ENCODE measurements at regions of chr9 and their contacts with region 1.

Region 1: GRCh38 chr9:133876144-133876543 is 116.0 kb downstream of the VAV2 start:
- DNase-seq: peak in 1 of 2 experiments; percentile 97
- H3K4me3 ChIP-seq: no peak overlapping the region
- H3K27ac ChIP-seq: no peak overlapping the region
- H3K4me1 ChIP-seq: peaks cover 0 to 10% (median 2%) of the 10 kb centered on the region in 4 experiments; a peak in 5 of 7 replicates
- H3K27me3 ChIP-seq: no peaks in the 10 kb centered on the region
- CTCF ChIP-seq: peak in 2 of 3 experiments; percentile 80 to 86; a peak in 3 of 4 replicates
- EP300 ChIP-seq: no peak
- POLR2A ChIP-seq: no peak
- RAD21 ChIP-seq: peak; percentile 54 to 71

Region 2: DNA sequence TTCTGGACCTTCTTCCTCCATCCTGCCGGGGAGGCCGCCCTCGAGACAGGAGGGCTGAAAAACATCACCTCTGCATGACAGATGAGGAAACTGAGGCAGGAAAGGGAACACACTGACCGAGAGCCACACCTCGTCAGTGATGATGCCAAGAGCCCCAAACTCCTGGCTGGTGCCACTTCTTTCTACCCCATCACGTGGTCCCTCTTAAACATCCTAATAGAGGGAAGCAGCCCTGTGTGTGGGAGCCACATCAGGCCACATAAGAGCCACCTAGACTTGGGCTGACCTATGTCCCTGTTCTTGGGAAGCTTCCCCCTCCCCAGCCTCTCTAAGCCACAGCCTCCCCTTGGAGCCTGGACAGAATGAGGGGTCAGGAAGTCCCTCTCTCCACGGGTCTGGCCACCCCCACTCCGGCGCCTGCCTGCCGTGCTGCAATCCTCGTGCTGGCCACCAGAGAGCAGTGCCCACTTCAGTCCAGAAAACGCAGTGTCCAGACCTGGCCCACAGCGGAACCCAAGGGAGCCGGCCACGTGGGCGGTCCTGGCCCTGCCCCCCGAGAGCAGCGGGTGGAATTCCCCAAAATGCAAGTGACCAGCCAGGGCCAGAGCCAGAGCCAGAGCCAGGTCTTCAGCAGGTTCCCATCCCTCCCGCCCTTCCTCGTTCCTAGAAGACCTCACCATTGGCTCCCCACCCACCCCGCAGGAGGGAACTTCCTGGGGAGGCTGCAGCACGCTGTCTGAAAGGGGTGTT is 83.2 kb before region 1 on chr9:
- CTCF ChIA-PET with region 1: interaction called, 22 read pairs
- POLR2A ChIA-PET with region 1: no interaction called
- DNase-seq: peak in 1 of 2 experiments; percentile 90
- H3K4me3 ChIP-seq: no peak overlapping the region
- H3K27ac ChIP-seq: no peak overlapping the region
- H3K4me1 ChIP-seq: peaks cover 0 to 9% (median 3%) of the 10 kb centered on the region in 4 experiments; a peak in 6 of 7 replicates
- H3K27me3 ChIP-seq: no peaks in the 10 kb centered on the region
- CTCF ChIP-seq: peak in 2 of 3 experiments; percentile 90 to 92; a peak in 3 of 4 replicates
- EP300 ChIP-seq: no peak
- POLR2A ChIP-seq: no peak
- RAD21 ChIP-seq: peak; percentile 88 to 91

Region 3: DNA sequence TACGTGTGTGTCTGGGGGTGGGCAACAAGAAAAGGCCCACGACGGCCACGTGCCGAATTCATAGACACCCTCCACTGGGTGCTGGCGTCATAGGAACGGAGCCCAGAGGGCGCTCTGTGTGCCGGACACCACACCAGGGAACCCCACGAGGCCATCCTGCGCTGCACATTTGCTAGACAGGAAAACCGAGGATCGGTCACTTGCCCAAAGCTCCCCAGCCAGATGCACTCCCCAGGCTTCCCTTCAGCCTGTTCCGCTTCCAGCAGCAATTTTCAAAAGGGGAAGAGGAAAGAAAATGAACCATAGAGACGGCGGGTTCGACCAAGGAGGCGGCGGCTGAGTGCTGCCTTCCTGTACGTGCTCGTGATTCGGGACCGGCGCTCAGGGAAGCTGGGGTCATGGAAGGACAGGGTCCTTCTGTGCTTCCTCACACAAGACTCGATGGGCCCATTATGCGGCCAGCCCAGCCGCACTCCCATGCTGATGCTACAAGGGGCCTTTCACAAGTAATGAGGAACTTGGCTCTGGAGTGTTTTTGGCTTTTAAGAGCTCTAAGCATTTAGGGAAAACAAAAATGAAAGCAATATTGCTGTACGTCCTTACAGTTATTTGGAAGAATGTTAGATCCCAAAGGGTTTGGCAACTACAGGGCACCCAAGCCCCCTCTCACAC is 13.4 kb before region 1 on chr9:
- CTCF ChIA-PET with region 1: interaction called, 41 read pairs
- POLR2A ChIA-PET with region 1: no interaction called
- DNase-seq: no peak
- H3K4me3 ChIP-seq: no peak overlapping the region
- H3K27ac ChIP-seq: no peak overlapping the region
- H3K4me1 ChIP-seq: peaks cover 0 to 19% (median 6%) of the 10 kb centered on the region in 4 experiments; a peak in 4 of 7 replicates
- H3K27me3 ChIP-seq: no peaks in the 10 kb centered on the region
- CTCF ChIP-seq: no peak
- EP300 ChIP-seq: no peak
- POLR2A ChIP-seq: no peak
- RAD21 ChIP-seq: no peak

Region 4: DNA sequence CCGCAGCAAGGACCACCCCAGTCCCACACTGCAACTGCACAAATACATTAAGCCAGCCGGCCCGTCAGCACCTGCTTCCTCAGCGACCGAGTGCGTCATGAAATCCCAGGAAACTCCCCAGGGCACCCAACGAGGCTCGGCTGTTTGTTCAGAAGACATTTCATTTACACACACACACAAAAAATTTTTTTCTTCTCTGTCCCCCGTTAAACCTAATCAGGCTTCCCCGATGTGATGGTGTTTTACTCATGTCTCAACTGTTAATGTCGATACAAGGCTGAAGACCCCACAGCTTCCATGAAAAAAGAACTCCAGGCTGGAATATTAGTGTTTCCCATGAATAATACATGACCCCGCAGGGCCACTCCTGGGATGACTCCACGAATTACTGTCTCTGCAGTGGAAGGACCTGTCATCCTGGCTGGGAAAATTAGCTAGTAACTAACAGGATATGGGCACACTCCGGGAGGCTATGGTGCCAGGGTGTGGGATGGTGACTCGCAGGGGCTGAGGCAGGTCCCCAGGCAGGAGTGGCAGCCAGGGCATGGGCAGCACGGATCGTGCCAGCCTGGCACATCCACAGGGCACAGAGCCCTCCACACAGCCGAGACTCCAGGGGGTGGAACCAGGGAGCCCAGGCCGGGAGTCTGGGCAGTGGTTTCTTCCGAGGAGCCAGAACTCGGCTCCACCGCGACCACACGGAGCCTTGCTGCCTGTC is 13.6 kb after region 1 on chr9:
- CTCF ChIA-PET with region 1: interaction called, 17 read pairs
- POLR2A ChIA-PET with region 1: interaction called, 3 read pairs
- DNase-seq: peak in 1 of 2 experiments; percentile 43
- H3K4me3 ChIP-seq: no peak overlapping the region
- H3K27ac ChIP-seq: no peak overlapping the region
- H3K4me1 ChIP-seq: peaks cover 0 to 50% (median 22%) of the 10 kb centered on the region in 4 experiments; a peak in 6 of 7 replicates
- H3K27me3 ChIP-seq: no peaks in the 10 kb centered on the region
- CTCF ChIP-seq: no peak
- EP300 ChIP-seq: no peak
- POLR2A ChIP-seq: no peak
- RAD21 ChIP-seq: no peak

Region 5: GRCh38 chr9:133955821-133956411 is 79.8 kb after region 1 on chr9:
- CTCF ChIA-PET with region 1: interaction called, 10 read pairs
- POLR2A ChIA-PET with region 1: no interaction called
- DNase-seq: peak in 1 of 2 experiments; percentile 77
- H3K4me3 ChIP-seq: peak overlapping the region in 3 of 4 experiments; percentile 21 to 45 (median 24); a peak in 4 of 8 replicates
- H3K27ac ChIP-seq: peak overlapping the region; percentile 82; the same call in 1 of the 2 replicates
- H3K4me1 ChIP-seq: peaks cover 14 to 47% (median 42%) of the 10 kb centered on the region in 4 experiments
- H3K27me3 ChIP-seq: no peaks in the 10 kb centered on the region
- CTCF ChIP-seq: peak in 1 of 3 experiments; percentile 5; a peak in 1 of 4 replicates
- EP300 ChIP-seq: peak in 1 of 2 experiments; percentile 18; a peak in 1 of 3 replicates
- POLR2A ChIP-seq: peak in 1 of 2 experiments; percentile 27; a peak in 1 of 3 replicates
- RAD21 ChIP-seq: peak; percentile 2 to 18; a peak in 1 of 4 replicates